HEK293T (cell line): ENCODE measurements at regions of chr17 and their contacts with region 1.

Region 1: GRCh38 chr17:56913864-56914640 is at the start of gene TRIM25:
- DNase-seq: peak; percentile 93

Region 2: GRCh38 chr17:56894814-56895555 is 19.1 kb before region 1 on chr17:
- CTCF ChIA-PET with region 1: no interaction called
- POLR2A ChIA-PET with region 1: interaction called, 10 read pairs
- DNase-seq: no peak

Region 3: DNA sequence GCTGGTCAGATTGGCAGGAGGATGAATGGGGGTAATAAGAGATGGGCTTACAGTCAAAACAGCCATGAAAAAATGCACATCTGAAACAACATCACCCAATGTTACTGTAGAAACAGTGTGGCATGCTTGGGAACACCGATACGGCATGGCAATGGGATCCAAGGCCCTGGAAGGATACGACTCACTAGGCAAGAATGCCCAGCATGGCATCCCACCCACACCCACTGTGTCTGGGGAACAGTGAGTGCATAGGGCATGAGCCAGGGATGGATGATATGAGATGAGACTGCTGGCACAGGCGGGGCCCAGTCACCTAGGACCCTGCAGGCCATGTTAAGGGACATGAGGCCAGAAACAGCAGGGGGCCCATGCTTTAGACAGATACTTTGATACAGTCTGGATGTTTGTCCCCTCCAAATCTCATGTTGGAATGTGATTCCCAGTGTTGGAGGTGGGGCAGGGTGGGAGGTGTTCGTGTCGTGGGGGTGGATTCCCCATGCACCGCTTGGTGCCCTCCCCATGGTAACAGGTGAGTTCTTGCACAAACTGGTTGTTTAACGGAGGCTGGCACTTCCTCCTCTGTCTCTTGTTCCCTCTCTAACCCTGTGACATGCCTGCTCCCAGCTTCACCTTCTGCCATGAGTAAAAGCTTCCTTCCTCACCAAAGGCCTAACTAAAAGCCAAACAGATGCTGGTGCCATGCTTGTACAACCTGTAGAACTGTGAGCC is 11.5 kb before region 1 on chr17:
- CTCF ChIA-PET with region 1: no interaction called
- POLR2A ChIA-PET with region 1: interaction called, 14 read pairs
- DNase-seq: no peak

Region 4: DNA sequence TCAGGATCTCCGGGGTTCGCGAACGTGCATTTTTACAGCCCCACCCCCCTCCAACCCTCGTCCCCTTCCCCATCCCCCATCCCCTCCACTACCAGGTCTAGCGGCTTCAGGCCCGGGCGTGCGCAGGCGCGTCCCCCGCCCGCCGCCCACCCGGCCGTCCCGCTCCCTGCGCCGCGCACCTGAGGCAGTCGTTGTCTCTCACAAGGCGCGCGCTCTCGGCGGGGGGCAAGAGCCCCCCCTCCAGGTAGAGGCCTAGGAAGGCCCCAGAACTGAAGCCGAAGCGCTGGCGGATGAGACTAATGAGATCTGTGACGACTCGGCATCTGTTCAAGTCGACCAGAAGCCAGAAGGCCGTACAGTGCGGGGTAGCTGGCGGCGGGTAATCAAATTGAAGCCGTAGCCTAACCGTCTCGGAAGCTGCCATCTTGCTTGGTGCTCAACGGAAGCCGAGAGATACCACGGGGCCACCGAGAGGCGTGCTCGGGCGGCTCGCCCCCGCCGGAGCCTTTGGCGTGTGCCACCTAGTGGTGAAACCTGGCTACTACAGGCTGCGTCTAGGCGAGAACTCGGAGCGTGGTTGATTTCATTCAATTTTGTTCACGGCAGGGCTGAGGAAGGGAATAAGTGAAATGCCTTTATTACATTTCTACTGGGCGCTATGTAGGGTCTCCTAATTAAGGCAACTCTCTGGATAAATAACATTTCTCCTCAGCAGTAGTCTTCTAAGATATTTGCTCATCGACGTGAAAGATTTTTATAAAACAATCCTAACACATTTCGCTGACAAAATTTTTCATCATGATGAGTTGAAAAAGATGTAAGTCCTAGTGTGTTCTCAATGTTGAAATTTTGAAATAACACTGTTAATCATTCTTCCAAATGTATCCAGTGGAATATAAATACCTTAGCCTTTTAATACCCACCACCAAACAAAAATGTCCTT is 46.8 kb after region 1 on chr17 and contains the start of gene COIL:
- CTCF ChIA-PET with region 1: no interaction called
- POLR2A ChIA-PET with region 1: no interaction called
- DNase-seq: peak; percentile 97